ENCODE measurements at regions of chr6 and their contacts with region 1.

Region 1: GRCh38 chr6:25556516-25556915 is 95.5 kb upstream of the SCGN start:
- DNase-seq: peak; percentile 81
- H3K4me3 Mint-ChIP-seq: no peak overlapping the region
- H3K27ac Mint-ChIP-seq: no peak overlapping the region
- H3K4me1 Mint-ChIP-seq: peaks cover 2% of the 10 kb centered on the region
- H3K27me3 Mint-ChIP-seq: no peaks in the 10 kb centered on the region

Region 2: DNA sequence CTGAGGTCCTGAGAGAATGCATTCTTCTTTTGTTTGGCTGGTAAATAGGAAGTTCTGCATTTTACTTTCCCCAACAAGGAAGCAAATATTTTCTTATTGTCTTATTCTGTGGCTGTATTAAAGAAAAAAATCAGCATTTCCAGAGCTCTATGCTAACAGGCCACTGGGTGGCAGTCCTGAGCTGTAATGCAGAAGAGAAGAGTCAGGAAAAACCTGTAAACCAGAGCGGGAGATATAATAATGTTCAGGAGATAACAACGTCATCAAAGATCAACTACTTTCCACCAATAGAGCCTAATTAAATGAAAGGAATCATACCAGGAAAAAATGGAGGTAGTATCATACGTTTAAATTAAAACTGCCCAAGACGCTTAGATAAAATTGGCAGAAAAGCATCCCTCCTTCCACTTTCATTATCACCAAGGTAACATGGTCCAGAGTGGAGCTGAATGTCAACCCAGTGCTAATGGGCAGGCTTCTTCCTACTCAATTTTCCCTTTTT is 333.0 kb before region 1 on chr6:
- CTCF ChIA-PET with region 1: interaction called, 24 read pairs
- POLR2A ChIA-PET with region 1: no interaction called
- DNase-seq: peak; percentile 66
- H3K4me3 Mint-ChIP-seq: peak overlapping the region; percentile 38
- H3K27ac Mint-ChIP-seq: no peak overlapping the region
- H3K4me1 Mint-ChIP-seq: peaks cover 16% of the 10 kb centered on the region
- H3K27me3 Mint-ChIP-seq: no peaks in the 10 kb centered on the region

Region 3: DNA sequence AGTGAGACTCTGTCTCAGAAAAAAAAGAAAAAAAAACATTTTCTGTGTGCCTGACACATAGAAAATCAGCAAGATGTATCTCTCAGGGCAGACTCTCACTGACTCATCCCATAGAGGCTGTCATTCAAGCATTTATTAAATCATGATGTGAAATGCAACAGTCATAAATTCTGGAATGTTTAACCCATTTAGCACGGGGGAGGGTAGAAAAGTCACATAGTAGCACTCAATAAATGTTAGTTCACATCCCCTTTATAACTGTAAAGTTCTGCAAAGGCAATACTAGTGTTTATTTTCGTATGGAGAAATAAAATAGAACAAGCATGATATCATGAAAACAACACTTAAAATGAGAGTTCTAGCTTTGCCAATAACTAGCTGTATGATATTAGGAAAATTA is 292.9 kb before region 1 on chr6:
- CTCF ChIA-PET with region 1: interaction called, 34 read pairs
- POLR2A ChIA-PET with region 1: no interaction called
- DNase-seq: no peak
- H3K4me3 Mint-ChIP-seq: no peak overlapping the region
- H3K27ac Mint-ChIP-seq: no peak overlapping the region
- H3K4me1 Mint-ChIP-seq: peaks cover 1% of the 10 kb centered on the region
- H3K27me3 Mint-ChIP-seq: peaks cover 16% of the 10 kb centered on the region

Region 4: GRCh38 chr6:25278914-25279747 is 277.4 kb before region 1 on chr6 and contains the start of gene CARMIL1:
- CTCF ChIA-PET with region 1: interaction called, 23 read pairs
- POLR2A ChIA-PET with region 1: no interaction called
- DNase-seq: peak; percentile 69
- H3K4me3 Mint-ChIP-seq: peak within 1 kb of the TSS; percentile 75
- H3K27ac Mint-ChIP-seq: no peak within 1 kb of the TSS
- H3K4me1 Mint-ChIP-seq: peaks cover 20% of the 10 kb centered on the region
- H3K27me3 Mint-ChIP-seq: peaks cover 19% of the 10 kb centered on the region
- total RNA-seq, gene CARMIL1: 1.3 to 1.5 TPM

Region 5: DNA sequence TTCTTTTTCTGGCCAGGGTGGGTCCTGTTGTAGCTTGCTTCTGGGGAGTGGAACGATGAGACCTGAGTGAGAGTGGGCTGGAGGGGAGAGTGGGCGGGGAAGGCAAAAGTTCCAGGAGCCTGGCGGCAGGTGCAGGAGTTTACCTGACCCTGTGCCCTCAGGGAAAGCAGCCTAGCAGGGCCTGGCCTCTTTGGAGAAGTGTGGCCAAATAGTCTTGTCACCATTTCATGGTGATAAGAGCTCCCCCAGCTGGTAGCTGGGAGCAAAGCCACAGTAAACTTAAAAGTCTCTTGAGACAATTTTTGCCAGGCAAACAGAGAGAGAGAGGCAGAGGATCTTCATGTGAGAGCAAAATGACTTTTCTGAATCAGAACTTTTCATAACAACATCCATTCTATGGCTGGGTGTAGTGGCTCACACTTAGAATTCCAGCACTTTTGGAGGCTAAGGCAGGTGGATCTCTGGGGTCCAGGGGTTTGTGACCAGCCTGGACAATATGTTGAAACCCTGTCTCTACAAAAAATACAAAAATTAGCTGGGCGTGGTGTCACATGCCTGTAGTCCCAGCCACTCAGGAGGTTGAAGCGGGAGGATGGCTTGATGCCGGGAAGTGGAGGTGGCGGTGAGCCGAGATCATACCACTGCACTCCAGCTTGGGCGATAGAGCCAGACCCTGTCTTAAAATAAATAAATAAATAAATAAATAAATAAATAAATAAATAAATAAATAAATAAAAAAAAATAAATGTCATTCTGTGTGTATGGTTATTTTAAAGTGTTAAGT is 66.3 kb before region 1 on chr6:
- CTCF ChIA-PET with region 1: interaction called, 12 read pairs
- POLR2A ChIA-PET with region 1: no interaction called
- DNase-seq: peak; percentile 70
- H3K4me3 Mint-ChIP-seq: no peak overlapping the region
- H3K27ac Mint-ChIP-seq: no peak overlapping the region
- H3K4me1 Mint-ChIP-seq: peaks cover 4% of the 10 kb centered on the region
- H3K27me3 Mint-ChIP-seq: no peaks in the 10 kb centered on the region

Region 6: GRCh38 chr6:25570578-25570977 is 14.1 kb after region 1 on chr6:
- CTCF ChIA-PET with region 1: interaction called, 10 read pairs
- POLR2A ChIA-PET with region 1: no interaction called
- DNase-seq: no peak
- H3K4me3 Mint-ChIP-seq: no peak overlapping the region
- H3K27ac Mint-ChIP-seq: no peak overlapping the region
- H3K4me1 Mint-ChIP-seq: peaks cover 1% of the 10 kb centered on the region
- H3K27me3 Mint-ChIP-seq: no peaks in the 10 kb centered on the region

Region 7: DNA sequence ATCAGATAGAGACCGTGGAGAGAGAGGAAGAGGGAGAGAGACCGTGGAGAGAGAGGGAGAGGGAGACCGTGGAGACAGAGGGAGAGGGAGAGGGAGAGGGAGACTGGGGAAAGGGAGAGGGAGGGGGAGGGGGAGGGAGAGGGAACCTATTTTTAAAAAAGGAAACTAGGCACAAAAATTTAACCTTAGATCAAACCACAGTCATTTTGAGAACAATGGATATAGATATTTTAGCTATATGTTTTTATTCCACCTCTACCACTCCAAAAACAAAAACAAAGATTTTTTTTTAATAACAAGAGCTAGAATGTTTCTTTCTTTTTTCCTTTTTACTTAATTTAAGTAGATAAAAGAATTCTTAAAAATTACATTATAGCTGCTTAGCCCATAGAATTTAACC is 30.4 kb after region 1 on chr6:
- CTCF ChIA-PET with region 1: interaction called, 11 read pairs
- POLR2A ChIA-PET with region 1: no interaction called
- DNase-seq: no peak
- H3K4me3 Mint-ChIP-seq: no peak overlapping the region
- H3K27ac Mint-ChIP-seq: no peak overlapping the region
- H3K4me1 Mint-ChIP-seq: peaks cover 15% of the 10 kb centered on the region
- H3K27me3 Mint-ChIP-seq: no peaks in the 10 kb centered on the region

Region 8: DNA sequence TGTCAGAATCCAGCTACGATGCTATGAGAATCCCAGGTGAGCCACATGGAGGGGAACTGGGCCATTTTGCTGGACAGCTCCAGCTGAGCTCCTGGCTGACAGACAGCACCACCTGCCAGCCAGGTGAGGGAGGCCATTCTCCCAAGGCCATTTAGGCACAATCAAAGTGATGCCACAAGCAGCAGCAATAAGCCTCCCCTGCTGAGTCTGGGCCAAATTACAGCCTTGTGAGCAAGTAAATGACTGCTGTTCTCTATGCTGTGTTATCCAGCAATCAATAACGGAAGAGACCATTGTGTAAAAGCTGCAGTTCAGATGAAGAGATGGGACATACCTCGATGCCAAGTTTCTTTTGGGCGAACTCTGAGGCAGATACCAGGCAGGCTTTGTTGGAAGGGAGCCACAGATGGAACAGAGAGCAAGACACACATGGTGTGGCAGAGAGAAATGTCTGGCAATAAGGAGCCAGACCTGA is 81.5 kb after region 1 on chr6:
- CTCF ChIA-PET with region 1: no interaction called
- POLR2A ChIA-PET with region 1: no interaction called
- DNase-seq: no peak
- H3K4me3 Mint-ChIP-seq: no peak overlapping the region
- H3K27ac Mint-ChIP-seq: no peak overlapping the region
- H3K4me1 Mint-ChIP-seq: no peaks in the 10 kb centered on the region
- H3K27me3 Mint-ChIP-seq: peaks cover 27% of the 10 kb centered on the region